Activated CD4-positive, alpha-beta memory T cell treated with anti-CD3 and anti-CD28 coated beads, Interleukin-2, amount 10 ng/mL, durations not matched to agents 7 days and 5 days (primary cell): ENCODE measurements at regions of chr22 and their contacts with region 1.

Region 1: GRCh38 chr22:18024276-18024947 is at the start of gene MICAL3:
- DNase-seq: peak; percentile 71
- H3K4me3 Mint-ChIP-seq: peak within 1 kb of the TSS; percentile 80
- H3K27ac Mint-ChIP-seq: no peak within 1 kb of the TSS
- H3K4me1 Mint-ChIP-seq: peaks cover 15% of the 10 kb centered on the region
- H3K27me3 Mint-ChIP-seq: peaks cover 64% of the 10 kb centered on the region
- total RNA-seq, gene MICAL3: 30.3 to 31.4 TPM

Region 2: GRCh38 chr22:17830043-17830961 is 194.1 kb before region 1 on chr22:
- CTCF ChIA-PET with region 1: interaction called, 29 read pairs
- POLR2A ChIA-PET with region 1: no interaction called
- DNase-seq: peak; percentile 86
- H3K4me3 Mint-ChIP-seq: no peak overlapping the region
- H3K27ac Mint-ChIP-seq: no peak overlapping the region
- H3K4me1 Mint-ChIP-seq: no peaks in the 10 kb centered on the region
- H3K27me3 Mint-ChIP-seq: no peaks in the 10 kb centered on the region